ENCODE measurements at regions of chr1 and their contacts with region 1.

Region 1: GRCh38 chr1:228165372-228166169 is at the start of gene IBA57:
- DNase-seq: peak; percentile 95 to 99
- H3K4me3 ChIP-seq: peak within 1 kb of the TSS; percentile 54 to 79 (median 62)
- H3K27ac ChIP-seq: peak within 1 kb of the TSS; percentile 99
- H3K4me1 ChIP-seq: peaks cover 0 to 12% (median 8%) of the 10 kb centered on the region in 4 experiments; a peak in 6 of 7 replicates
- H3K27me3 ChIP-seq: peaks cover 0 to 3% (median 0%) of the 10 kb centered on the region in 4 experiments; a peak in 2 of 7 replicates
- CTCF ChIP-seq: peak in 2 of 3 experiments; percentile 75 to 82; a peak in 3 of 4 replicates
- EP300 ChIP-seq: peak in 1 of 2 experiments; percentile 33; a peak in 1 of 3 replicates
- POLR2A ChIP-seq: peak in 1 of 2 experiments; percentile 99; a peak in 2 of 3 replicates
- RAD21 ChIP-seq: no peak; a peak in 2 of 4 replicates
- total RNA-seq, gene IBA57: 5.9 and 7.8 TPM in 2 replicates

Region 2: DNA sequence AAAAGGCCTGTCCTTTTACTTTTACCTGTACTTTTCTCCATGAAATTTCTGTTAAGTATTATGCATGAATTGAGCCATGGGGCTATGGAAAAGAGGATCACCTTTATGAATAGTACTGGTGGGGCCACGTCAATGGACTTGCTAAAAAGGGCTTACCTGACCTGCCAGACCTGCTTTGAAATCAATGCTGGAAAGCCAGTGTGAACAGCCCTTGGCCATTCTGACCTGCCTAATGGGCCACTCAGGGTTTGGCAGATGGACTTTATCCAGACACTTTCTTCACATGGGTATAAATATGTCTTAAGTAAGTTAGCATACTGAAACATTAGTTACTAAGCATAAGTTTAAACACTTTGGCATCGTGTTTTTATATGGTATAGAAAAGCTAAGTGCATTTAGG is 33.8 kb before region 1 on chr1:
- CTCF ChIA-PET with region 1: interaction called, 40 read pairs
- POLR2A ChIA-PET with region 1: interaction called, 3 read pairs
- DNase-seq: no peak
- H3K4me3 ChIP-seq: no peak overlapping the region
- H3K27ac ChIP-seq: no peak overlapping the region
- H3K4me1 ChIP-seq: no peaks in the 10 kb centered on the region; a peak in 1 of 7 replicates
- H3K27me3 ChIP-seq: peaks cover 0 to 21% (median 7%) of the 10 kb centered on the region in 4 experiments; a peak in 6 of 7 replicates
- CTCF ChIP-seq: no peak
- EP300 ChIP-seq: no peak
- POLR2A ChIP-seq: no peak
- RAD21 ChIP-seq: no peak

Region 3: DNA sequence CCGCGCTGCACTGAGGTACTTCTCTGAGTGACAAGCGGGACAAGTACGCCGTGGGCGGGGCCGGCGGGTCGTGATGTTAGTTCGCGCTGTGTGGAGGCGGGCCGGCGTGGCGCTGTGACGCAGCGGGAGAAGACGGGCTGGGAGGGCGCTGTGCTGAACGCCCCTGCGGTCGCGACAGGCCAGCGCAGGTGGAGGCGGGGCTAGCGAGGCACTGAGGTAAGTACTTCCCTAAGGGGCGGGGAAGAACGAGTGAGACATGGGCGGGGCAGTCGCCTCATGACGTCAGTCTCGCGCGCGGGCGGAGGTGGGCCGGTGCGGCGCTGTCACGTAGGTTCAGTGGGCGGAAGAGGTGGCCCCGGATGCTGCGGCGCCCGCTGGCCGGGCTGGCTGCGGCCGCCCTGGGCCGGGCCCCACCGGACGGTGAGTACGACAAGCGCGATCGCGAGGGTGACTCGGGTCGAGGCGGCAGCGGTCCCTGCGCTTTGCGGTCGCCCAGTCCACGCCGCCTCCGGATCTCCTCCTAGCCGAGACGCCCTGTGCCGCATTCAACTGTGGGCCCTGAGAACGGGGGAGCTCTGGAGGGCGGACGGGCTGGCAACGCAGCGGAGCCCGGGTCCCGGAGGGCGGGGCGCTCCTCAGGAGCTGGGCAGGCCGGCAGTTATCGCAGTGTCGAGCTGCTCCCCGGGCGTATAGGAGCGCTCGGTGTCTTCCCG is 25.5 kb before region 1 on chr1 and contains the start of gene GUK1:
- CTCF ChIA-PET with region 1: interaction called, 17 read pairs
- POLR2A ChIA-PET with region 1: interaction called, 30 read pairs
- DNase-seq: peak; percentile 99 to 100
- H3K4me3 ChIP-seq: peak within 1 kb of the TSS; percentile 80 to 93 (median 88)
- H3K27ac ChIP-seq: peak within 1 kb of the TSS; percentile 85; the same call in 1 of the 2 replicates
- H3K4me1 ChIP-seq: peaks cover 0 to 10% (median 6%) of the 10 kb centered on the region in 4 experiments; a peak in 5 of 7 replicates
- H3K27me3 ChIP-seq: peaks cover 0 to 17% (median 1%) of the 10 kb centered on the region in 4 experiments; a peak in 3 of 7 replicates
- CTCF ChIP-seq: peak in 1 of 3 experiments; percentile 17; a peak in 2 of 4 replicates
- EP300 ChIP-seq: no peak
- POLR2A ChIP-seq: peak in 1 of 2 experiments; percentile 90; a peak in 2 of 3 replicates
- RAD21 ChIP-seq: no peak
- total RNA-seq, gene GUK1: 68.5 TPM in 2 replicates

Region 4: DNA sequence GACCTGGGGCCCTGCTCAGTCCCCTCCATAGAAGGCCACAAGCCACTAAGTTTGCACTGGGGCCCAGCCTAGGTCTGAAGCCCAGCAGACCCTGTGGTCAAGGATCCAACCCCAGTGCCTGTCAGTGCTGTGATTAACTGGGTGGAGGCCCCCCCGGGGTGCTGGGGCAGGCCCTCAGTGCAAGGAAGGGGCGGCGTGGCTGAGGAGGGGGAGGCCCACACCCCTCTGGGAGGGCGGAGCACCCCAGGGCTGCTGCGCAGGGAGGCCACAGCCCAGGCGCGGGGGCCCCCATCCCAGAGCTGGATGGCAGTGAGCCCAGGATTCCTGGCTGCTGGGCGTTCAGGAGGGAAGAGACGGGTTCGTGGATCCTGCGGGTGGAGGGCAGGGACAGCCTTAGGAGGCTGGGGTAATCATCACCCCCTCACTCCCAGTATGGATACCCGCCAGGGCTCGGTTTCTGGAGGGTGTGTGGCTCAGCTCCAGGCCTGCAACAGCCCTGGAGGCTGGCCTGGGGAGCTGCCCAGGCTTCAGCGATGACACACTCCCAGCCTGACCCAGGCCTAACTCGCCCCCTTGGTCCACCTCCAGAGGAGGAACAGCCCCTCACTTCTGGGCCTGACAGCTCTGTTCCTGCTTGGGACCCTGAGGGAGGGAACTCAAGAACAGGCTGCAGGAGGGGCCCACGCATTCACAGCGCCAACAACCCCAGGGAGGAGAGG is 15.0 kb before region 1 on chr1:
- CTCF ChIA-PET with region 1: interaction called, 10 read pairs
- POLR2A ChIA-PET with region 1: interaction called, 44 read pairs
- DNase-seq: peak in 1 of 2 experiments; percentile 42
- H3K4me3 ChIP-seq: no peak overlapping the region
- H3K27ac ChIP-seq: no peak overlapping the region
- H3K4me1 ChIP-seq: peaks cover 0 to 10% (median 4%) of the 10 kb centered on the region in 4 experiments; a peak in 1 of 7 replicates
- H3K27me3 ChIP-seq: 0 out of 7 replicates have a peak, but pooled peaks cover 0 to 5% (median 0%) of the 10 kb centered on the region in 4 experiments
- CTCF ChIP-seq: no peak
- EP300 ChIP-seq: no peak
- POLR2A ChIP-seq: no peak
- RAD21 ChIP-seq: no peak

Region 5: GRCh38 chr1:228180271-228180958 is 14.8 kb after region 1 on chr1:
- CTCF ChIA-PET with region 1: interaction called, 23 read pairs
- POLR2A ChIA-PET with region 1: interaction called, 14 read pairs
- DNase-seq: no peak
- H3K4me3 ChIP-seq: no peak overlapping the region
- H3K27ac ChIP-seq: no peak overlapping the region
- H3K4me1 ChIP-seq: no peaks in the 10 kb centered on the region
- H3K27me3 ChIP-seq: no peaks in the 10 kb centered on the region; a peak in 1 of 7 replicates
- CTCF ChIP-seq: peak in 2 of 3 experiments; percentile 39 to 53; a peak in 3 of 4 replicates
- EP300 ChIP-seq: no peak
- POLR2A ChIP-seq: no peak
- RAD21 ChIP-seq: no peak; a peak in 1 of 4 replicates

Region 6: GRCh38 chr1:228387321-228387720 is 221.8 kb after region 1 on chr1:
- CTCF ChIA-PET with region 1: no interaction called
- POLR2A ChIA-PET with region 1: no interaction called
- DNase-seq: no peak
- H3K4me3 ChIP-seq: no peak overlapping the region
- H3K27ac ChIP-seq: no peak overlapping the region
- H3K4me1 ChIP-seq: no peaks in the 10 kb centered on the region
- H3K27me3 ChIP-seq: no peaks in the 10 kb centered on the region; a peak in 2 of 7 replicates
- CTCF ChIP-seq: no peak
- EP300 ChIP-seq: no peak
- POLR2A ChIP-seq: no peak
- RAD21 ChIP-seq: no peak